Activated B cell treated with CpG ODN at 0.5 μM for 24 hours (primary cell): ENCODE measurements at regions of chr10 and their contacts with region 1.

Region 1: GRCh38 chr10:66180581-66181318 is 745.1 kb upstream of the LRRTM3 start:
- DNase-seq: no peak
- ATAC-seq: peak; percentile 61
- H3K4me3 Mint-ChIP-seq: no peak overlapping the region
- H3K27ac Mint-ChIP-seq: no peak overlapping the region
- H3K4me1 Mint-ChIP-seq: no peaks in the 10 kb centered on the region
- H3K27me3 Mint-ChIP-seq: no peaks in the 10 kb centered on the region
- CTCF ChIP-seq: no peak

Region 2: GRCh38 chr10:66931340-66931948 is 750.7 kb after region 1 on chr10:
- CTCF ChIA-PET with region 1: no interaction called
- POLR2A ChIA-PET with region 1: no interaction called
- intact Hi-C with region 1: loop called (anchors 2 kb)
- DNase-seq: no peak
- ATAC-seq: no peak
- H3K4me3 Mint-ChIP-seq: no peak overlapping the region
- H3K27ac Mint-ChIP-seq: no peak overlapping the region
- H3K4me1 Mint-ChIP-seq: no peaks in the 10 kb centered on the region
- H3K27me3 Mint-ChIP-seq: peaks cover 21% of the 10 kb centered on the region
- CTCF ChIP-seq: peak; percentile 85